ENCODE measurements at regions of chr9 and their contacts with region 1.

Region 1: GRCh38 chr9:34989003-34989945 is at the start of gene DNAJB5:
- H3K4me3 Mint-ChIP-seq: peak within 1 kb of the TSS; percentile 76
- H3K27ac Mint-ChIP-seq: peak within 1 kb of the TSS; percentile 83
- H3K4me1 Mint-ChIP-seq: peaks cover 86% of the 10 kb centered on the region
- H3K27me3 Mint-ChIP-seq: peaks cover 3% of the 10 kb centered on the region

Region 2: DNA sequence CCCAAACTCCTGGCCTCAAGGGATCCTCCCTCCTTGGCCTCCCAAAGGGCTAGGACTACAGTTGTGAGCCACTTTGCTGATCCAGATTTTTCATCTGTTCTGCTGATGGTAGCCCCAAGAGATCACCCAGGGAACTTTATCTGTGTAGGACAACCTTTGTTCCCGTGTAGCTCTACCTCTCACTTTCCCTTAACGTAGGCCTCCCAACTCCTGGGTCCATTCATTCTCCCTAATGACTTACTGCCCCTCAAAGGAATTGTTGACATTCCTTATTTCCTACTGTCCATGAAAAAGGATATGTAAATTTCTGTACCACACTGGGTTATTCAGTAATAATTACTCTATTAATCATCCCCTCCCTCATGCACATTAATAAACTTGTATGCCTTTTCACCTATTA is 82.2 kb before region 1 on chr9:
- intact Hi-C with region 1: no loop called
- H3K4me3 Mint-ChIP-seq: no peak overlapping the region
- H3K27ac Mint-ChIP-seq: no peak overlapping the region
- H3K4me1 Mint-ChIP-seq: peaks cover 3% of the 10 kb centered on the region
- H3K27me3 Mint-ChIP-seq: peaks cover 14% of the 10 kb centered on the region

Region 3: DNA sequence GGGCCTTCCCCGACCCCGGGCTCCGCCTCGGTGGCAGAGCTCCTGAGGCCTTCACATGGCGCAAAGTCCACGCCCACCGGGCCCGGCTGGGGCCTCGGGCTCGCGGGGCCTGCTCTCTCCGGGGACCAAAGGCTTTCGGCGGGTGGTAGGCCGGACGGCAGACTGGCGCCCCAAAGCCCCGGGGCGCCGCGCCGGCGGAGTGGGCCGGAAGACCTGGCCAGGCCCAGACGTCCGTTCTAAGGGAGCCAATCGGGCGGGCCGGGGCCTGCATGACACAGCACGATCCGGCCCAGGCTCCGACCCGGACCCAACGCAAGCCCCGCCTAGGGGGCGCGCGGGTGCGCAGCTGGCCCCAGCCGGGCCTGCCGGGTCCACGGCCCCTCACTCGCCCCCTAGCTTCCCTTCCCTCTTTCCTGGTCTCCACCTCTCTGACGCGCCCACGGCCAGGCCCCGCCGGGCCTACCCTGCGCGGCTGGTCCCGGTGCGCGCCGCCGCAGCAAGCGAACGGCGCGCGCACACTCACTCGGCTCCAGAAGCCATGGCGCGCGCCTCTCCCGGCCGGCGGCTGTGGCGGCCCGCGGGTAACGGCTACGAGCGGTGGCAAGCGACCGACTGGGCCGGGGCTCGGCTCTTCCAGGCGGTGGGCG is 82.7 kb after region 1 on chr9:
- intact Hi-C with region 1: loop called (anchors 1 kb)
- H3K4me3 Mint-ChIP-seq: peak overlapping the region; percentile 82
- H3K27ac Mint-ChIP-seq: peak overlapping the region; percentile 96
- H3K4me1 Mint-ChIP-seq: peaks cover 36% of the 10 kb centered on the region
- H3K27me3 Mint-ChIP-seq: no peaks in the 10 kb centered on the region

Region 4: GRCh38 chr9:35111001-35111933 is 122.0 kb after region 1 on chr9:
- intact Hi-C with region 1: loop called (anchors 1 kb)
- H3K4me3 Mint-ChIP-seq: peak overlapping the region; percentile 82
- H3K27ac Mint-ChIP-seq: peak overlapping the region; percentile 88
- H3K4me1 Mint-ChIP-seq: peaks cover 68% of the 10 kb centered on the region
- H3K27me3 Mint-ChIP-seq: no peaks in the 10 kb centered on the region